Activated naive CD4-positive, alpha-beta T cell treated with anti-CD3 and anti-CD28 coated beads for 36 hours (primary cell): ENCODE measurements at regions of chr11 and their contacts with region 1.

Region 1: GRCh38 chr11:1844221-1845094 is 5.7 kb downstream of the TNNI2 start:
- DNase-seq: peak; percentile 73
- H3K4me3 Mint-ChIP-seq: peak overlapping the region; percentile 52
- H3K27ac Mint-ChIP-seq: peak overlapping the region; percentile 66
- H3K4me1 Mint-ChIP-seq: peaks cover 58% of the 10 kb centered on the region
- H3K27me3 Mint-ChIP-seq: no peaks in the 10 kb centered on the region

Region 2: GRCh38 chr11:2002807-2003206 is 158.3 kb after region 1 on chr11:
- CTCF ChIA-PET with region 1: interaction called, 14 read pairs
- intact Hi-C with region 1: no loop called
- DNase-seq: no peak
- H3K4me3 Mint-ChIP-seq: no peak overlapping the region
- H3K27ac Mint-ChIP-seq: no peak overlapping the region
- H3K4me1 Mint-ChIP-seq: no peaks in the 10 kb centered on the region
- H3K27me3 Mint-ChIP-seq: no peaks in the 10 kb centered on the region